ENCODE measurements at regions of chr16 and their contacts with region 1.

Region 1: DNA sequence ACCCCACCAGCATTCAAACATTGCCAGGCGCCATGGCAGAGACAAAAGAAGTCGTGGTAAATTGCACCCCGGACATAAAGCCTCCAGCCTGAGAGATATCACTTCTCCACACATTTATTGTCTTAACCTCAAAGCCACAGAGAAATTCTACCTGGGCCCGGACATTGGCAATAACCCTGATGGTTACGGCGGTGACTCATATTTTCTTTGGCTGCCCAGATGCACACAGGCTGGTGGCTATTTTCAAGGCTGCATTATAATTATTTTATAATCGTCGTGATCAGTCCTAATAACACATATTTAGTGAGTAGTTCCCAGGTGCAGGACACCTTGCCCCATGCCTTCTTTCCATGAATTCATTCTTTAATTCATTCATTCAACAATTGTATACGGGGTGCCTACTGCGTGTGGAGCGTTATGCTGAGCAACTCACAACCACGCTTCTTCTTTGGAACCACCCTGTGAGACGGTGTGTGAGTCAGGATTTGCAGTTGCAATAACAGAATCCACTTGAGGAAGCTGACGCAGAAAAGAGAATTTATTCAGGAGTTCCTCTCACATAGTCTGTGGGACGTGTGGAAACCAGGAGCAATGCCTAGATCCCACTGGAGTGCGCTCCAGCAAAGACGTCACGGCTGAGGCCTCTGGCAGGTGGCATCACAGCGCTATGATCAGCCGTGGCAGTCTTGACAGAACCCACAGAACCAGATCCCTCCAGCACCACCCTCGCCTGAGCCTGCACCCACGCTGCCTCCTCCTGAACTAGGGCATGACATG is 245.7 kb downstream of the FOXL1 start:
- DNase-seq: peak; percentile 96
- H3K4me3 ChIP-seq: no peak overlapping the region
- H3K27ac ChIP-seq: peak overlapping the region; percentile 40
- H3K4me1 ChIP-seq: peaks cover 43% of the 10 kb centered on the region
- H3K27me3 ChIP-seq: no peaks in the 10 kb centered on the region
- CTCF ChIP-seq: no peak

Region 2: GRCh38 chr16:86892509-86892908 is 68.4 kb after region 1 on chr16:
- CTCF ChIA-PET with region 1: no interaction called
- dilution Hi-C with region 1: loop called (anchors 5 kb)
- in situ Hi-C with region 1: no loop called
- intact Hi-C with region 1: no loop called
- DNase-seq: no peak
- H3K4me3 ChIP-seq: no peak overlapping the region
- H3K27ac ChIP-seq: no peak overlapping the region
- H3K4me1 ChIP-seq: no peaks in the 10 kb centered on the region
- H3K27me3 ChIP-seq: no peaks in the 10 kb centered on the region
- CTCF ChIP-seq: no peak

Region 3: GRCh38 chr16:86951831-86952598 is 127.9 kb after region 1 on chr16:
- CTCF ChIA-PET with region 1: no interaction called
- dilution Hi-C with region 1: no loop called
- in situ Hi-C with region 1: no loop called
- intact Hi-C with region 1: loop called (anchors 5 kb)
- DNase-seq: peak; percentile 92
- H3K4me3 ChIP-seq: no peak overlapping the region
- H3K27ac ChIP-seq: peak overlapping the region; percentile 17
- H3K4me1 ChIP-seq: peaks cover 30% of the 10 kb centered on the region
- H3K27me3 ChIP-seq: no peaks in the 10 kb centered on the region
- CTCF ChIP-seq: no peak

Measured in mammary epithelial cell (primary cell).